H1 (cell line): ENCODE measurements at regions of chr18 and their contacts with region 1.

Region 1: DNA sequence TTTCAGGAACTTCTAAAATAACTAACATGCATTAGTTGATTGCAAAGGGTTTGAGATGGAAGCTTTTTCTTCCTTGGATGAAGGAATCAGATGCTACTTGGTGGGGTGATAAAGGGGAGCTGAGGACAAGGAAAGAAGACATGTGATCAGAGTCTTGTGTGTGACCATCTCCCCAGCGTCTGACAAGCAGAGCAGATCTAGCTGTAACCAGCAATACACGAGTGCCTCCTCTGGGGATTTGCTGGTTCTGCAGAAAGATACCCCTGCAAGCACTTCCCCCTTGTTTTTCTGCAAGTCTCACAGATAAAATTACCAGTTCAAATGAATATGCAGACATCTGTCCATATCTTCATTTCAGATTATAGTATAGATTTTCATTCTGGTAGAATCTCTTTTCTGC is 2.7 kb downstream of the CDH7 start:
- DNase-seq: no peak
- H3K4me3 ChIP-seq: no peak overlapping the region
- H3K27ac ChIP-seq: no peak overlapping the region
- H3K4me1 ChIP-seq: peaks cover 0 to 9% (median 3%) of the 10 kb centered on the region in 4 experiments; a peak in 4 of 7 replicates
- H3K27me3 ChIP-seq: peaks cover 9 to 28% (median 14%) of the 10 kb centered on the region in 4 experiments
- CTCF ChIP-seq: peak; percentile 57 to 91 (median 78)
- EP300 ChIP-seq: no peak
- POLR2A ChIP-seq: no peak
- RAD21 ChIP-seq: peak; percentile 91

Region 2: DNA sequence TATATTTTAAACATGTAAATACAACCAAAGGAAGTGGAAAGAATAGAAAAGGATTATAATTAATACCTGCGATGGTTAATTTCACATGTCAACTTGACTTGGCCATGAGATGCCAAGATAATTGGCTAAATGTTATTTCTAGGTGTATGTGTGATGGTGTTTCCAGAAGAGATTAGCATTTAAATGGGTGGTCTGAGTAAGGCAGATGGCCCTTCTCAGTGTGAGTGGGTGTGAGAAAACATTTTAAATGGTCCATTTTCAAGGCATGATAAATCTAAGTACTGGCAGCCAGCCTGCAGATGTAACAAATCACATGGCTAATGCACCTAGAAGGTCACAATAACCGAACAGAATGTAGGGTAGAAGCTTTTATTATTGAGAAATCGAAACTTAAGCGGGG is 102.3 kb before region 1 on chr18:
- CTCF ChIA-PET with region 1: no interaction called
- POLR2A ChIA-PET with region 1: no interaction called
- DNase-seq: no peak
- H3K4me3 ChIP-seq: no peak overlapping the region
- H3K27ac ChIP-seq: no peak overlapping the region
- H3K4me1 ChIP-seq: no peaks in the 10 kb centered on the region
- H3K27me3 ChIP-seq: no peaks in the 10 kb centered on the region
- CTCF ChIP-seq: no peak
- EP300 ChIP-seq: no peak
- POLR2A ChIP-seq: no peak
- RAD21 ChIP-seq: no peak

Region 3: GRCh38 chr18:65725251-65726050 is 28.1 kb before region 1 on chr18:
- CTCF ChIA-PET with region 1: interaction called, 19 read pairs
- POLR2A ChIA-PET with region 1: interaction called, 4 read pairs
- DNase-seq: peak; percentile 38 to 67
- H3K4me3 ChIP-seq: no peak overlapping the region
- H3K27ac ChIP-seq: no peak overlapping the region
- H3K4me1 ChIP-seq: no peaks in the 10 kb centered on the region
- H3K27me3 ChIP-seq: peaks cover 0 to 2% (median 0%) of the 10 kb centered on the region in 4 experiments; a peak in 1 of 7 replicates
- CTCF ChIP-seq: peak; percentile 59 to 75 (median 69)
- EP300 ChIP-seq: no peak
- POLR2A ChIP-seq: no peak
- RAD21 ChIP-seq: peak; percentile 81 to 83

Region 4: DNA sequence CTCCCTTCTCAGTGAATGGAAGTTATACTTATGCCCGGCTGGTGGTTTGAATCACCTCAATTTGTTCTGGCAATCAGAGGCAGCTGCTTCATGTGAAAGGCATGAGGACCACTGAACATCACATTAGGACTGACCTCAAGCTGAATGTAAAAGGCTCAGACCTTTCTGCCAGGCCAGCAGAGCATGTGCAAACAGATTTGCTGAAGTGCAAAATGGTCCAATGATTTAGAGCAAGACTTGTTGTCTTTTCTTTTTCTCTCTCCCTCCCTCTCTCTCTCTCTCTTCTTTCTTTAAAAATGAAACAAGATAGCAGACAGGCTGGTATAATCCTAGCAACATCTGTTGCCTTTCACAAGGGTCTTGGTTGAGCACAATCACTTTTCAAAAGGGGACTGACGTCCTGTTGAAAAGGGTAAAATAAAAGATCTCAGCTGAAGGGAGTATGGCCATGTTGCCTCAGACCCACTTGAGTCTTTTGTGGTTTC is 16.0 kb before region 1 on chr18:
- CTCF ChIA-PET with region 1: interaction called, 12 read pairs
- POLR2A ChIA-PET with region 1: no interaction called
- DNase-seq: no peak
- H3K4me3 ChIP-seq: no peak overlapping the region
- H3K27ac ChIP-seq: no peak overlapping the region
- H3K4me1 ChIP-seq: no peaks in the 10 kb centered on the region
- H3K27me3 ChIP-seq: no peaks in the 10 kb centered on the region
- CTCF ChIP-seq: no peak
- EP300 ChIP-seq: no peak
- POLR2A ChIP-seq: no peak
- RAD21 ChIP-seq: no peak